HEK293T (cell line): ENCODE measurements at regions of chr7 and their contacts with region 1.

Region 1: DNA sequence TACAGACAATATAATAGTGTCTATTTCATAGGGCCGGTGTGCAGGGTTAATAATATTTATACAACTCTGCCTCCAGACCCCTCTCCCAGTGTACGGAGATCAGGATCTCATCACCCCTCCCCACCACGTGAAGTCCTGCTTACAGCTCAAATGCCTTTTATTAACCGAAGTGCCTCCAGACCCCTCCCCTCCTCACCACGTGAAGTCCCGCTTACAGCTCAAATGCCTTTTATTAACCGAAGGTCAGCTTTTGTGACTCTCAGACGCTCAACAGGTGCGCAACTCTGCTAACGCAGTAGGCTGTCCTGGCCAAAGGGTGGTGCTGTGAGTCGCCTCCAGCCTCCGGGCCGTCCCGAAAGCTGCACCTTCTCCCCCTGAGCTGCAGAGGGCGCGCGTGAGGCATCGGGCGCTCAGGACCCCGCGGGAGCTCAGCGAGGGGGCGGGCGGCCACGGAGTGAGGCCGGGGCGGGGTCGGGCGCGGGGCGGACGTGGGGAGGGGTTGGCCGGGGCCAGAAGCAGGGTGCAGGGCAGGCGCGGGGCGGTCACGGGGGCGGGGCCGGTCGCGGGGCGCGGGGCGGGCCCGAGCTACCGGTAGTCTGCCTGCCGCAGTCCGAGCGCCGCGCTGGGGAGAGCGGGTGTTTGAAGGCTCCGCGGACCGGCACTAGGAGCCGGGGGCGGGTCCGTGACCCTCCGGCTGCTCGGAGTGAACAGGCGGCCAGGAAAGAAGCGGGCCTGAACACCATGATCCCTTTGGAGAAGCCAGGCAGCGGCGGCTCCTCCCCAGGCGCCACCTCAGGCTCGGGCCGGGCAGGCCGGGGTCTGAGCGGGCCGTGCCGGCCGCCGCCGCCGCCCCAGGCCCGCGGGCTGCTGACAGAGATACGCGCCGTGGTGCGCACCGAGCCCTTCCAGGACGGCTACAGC is at the start of gene STK17A:
- DNase-seq: peak; percentile 94

Region 2: GRCh38 chr7:43559171-43559936 is 23.4 kb before region 1 on chr7:
- CTCF ChIA-PET with region 1: interaction called, 10 read pairs
- POLR2A ChIA-PET with region 1: interaction called, 4 read pairs
- DNase-seq: no peak

Region 3: DNA sequence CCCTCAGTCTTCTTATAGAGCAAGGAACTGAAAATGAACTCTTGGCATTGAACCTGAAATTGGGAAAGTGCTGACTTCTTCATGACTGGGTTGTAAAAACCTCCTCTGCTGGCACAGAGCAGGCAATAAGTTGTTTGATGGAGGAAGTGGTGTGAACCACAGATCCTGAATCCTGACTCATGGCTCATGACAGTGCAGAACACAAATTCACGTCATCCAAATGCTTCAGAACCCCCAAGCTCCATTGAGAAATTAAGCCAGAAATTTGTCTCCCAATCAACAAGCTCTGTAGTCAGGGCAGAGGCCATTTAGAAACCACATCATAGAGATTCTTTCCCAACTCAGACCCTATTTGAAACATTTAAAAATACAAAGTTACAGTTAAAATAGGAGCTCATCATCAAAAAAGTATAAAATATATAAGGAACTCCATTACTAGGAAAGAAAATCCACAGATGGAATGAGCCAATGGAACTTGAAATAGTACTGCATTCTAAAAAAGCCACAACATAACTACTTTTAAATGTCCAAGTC is 10.2 kb before region 1 on chr7:
- CTCF ChIA-PET with region 1: interaction called, 23 read pairs
- POLR2A ChIA-PET with region 1: interaction called, 5 read pairs
- DNase-seq: no peak

Region 4: DNA sequence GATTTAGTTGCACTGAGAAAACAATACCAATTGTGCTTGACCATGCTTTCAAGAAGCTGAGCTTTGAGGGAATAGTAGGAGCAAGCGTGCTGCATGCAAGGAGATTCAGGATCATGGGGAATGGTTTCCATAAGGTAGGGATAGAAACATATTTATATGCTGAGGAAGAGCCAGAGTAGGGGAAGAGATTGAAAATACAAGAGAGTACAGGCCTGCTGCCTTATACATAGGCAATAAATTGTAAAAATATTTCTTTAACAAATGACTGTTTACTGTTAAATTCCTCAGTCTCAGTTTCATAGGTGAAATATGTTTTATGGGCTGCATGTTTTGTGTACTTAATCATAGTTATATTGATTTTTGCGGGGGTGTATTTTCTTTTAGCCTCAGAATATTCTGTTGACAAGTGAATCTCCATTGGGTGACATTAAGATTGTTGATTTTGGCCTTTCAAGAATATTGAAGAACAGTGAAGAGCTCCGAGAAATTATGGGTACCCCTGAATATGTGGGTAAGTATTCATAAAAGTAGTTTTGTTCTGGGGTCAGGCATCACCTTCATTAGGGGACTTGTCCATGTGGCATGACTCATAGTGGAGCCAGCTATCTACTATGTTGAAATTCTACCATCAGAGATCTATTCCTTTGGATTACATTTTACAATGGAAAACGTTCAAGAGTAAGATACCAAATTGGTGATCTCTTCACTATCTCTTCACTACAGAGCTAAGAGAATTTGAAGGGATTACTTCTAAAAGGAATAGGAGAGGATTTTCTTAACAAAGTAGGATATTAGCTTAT is 36.6 kb after region 1 on chr7:
- CTCF ChIA-PET with region 1: interaction called, 10 read pairs
- POLR2A ChIA-PET with region 1: no interaction called
- DNase-seq: no peak

Region 5: GRCh38 chr7:43700059-43700501 is 117.3 kb after region 1 on chr7:
- CTCF ChIA-PET with region 1: interaction called, 60 read pairs
- POLR2A ChIA-PET with region 1: interaction called, 14 read pairs
- DNase-seq: peak; percentile 37

Region 6: DNA sequence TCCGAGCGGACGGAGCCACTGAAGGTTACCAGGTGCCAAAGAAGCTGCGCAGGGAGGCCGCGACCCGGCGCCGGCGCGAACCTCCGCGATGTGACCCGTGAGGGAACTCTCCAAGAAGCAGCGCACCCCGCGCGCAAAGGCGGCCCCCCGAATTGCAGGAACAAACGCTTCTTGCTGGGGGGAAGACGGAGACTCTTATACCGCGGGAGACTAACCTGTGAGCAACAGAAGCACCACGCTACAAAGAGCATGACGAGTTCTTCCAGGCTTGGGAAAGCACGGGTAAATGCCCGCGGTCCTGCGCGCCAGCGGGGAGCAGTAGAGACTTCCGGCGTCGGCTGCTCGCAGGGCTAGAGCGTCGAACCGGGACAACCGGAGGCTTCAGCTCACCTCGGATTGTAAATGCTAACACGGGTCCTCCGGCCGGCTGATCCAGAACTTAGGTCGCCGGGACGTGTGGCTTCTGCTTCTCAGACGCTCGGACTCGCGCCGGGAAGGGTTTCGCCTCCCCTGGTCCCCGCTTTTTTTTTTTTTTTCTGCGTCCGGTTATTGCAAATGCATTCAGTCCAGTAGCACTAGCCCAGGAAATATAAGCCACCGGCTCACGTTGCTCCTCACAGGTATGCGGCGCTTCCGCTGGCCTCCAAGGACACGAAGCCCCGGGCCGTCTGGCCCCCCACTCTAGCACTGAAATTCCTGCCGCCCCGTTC is 146.6 kb after region 1 on chr7 and contains the start of gene COA1:
- CTCF ChIA-PET with region 1: interaction called, 7 read pairs
- POLR2A ChIA-PET with region 1: interaction called, 12 read pairs
- DNase-seq: peak; percentile 86

Region 7: GRCh38 chr7:43838201-43838659 is 255.5 kb after region 1 on chr7:
- CTCF ChIA-PET with region 1: interaction called, 24 read pairs
- POLR2A ChIA-PET with region 1: interaction called, 9 read pairs
- DNase-seq: no peak